ENCODE measurements at regions of chr4 and their contacts with region 1.

Region 1: DNA sequence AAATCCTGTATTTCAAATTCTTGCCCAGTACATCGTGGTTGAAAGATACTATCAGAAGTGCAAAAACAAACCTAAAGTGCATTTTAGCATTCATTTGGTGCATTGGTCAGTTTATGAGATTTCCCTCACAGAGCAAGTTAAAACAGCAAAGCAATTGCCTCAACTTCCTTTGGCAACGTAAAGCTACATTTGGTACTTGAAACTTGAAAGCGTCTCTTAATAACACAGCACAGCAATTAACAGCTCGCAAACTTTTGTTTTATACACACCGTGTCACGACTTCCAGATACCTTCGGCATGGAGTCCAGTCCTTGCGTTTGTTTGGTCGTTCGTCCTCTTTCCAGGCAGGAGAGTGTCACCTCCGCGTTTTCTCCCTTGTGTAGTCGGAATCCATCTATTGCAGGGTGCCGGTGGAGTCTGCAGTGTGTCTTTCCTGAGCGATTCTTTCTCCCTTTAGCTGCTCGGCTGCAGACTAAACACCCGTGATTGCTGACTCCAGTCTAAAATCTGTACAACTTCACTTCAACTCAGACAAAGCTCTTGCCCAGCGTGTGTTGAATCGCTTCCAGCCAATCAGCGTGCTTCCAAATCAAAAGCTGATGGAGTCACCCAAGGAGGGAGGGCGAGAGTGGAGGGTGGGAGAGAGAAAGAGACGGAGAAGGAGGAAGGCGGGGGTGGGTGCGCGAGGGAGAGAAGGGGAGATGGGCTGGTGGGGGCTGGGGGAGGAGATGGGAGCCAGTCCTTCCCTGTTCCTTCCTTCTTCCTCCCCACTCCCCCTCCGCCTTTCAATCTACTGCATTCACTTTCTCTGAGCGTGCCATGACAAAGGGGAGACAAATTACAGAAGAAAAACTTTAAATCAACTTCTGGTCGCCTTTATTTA is at the start of gene PCDH18:
- DNase-seq: peak; percentile 64

Region 2: GRCh38 chr4:137510557-137511265 is 21.5 kb before region 1 on chr4:
- CTCF ChIA-PET with region 1: interaction called, 5 read pairs
- POLR2A ChIA-PET with region 1: interaction called, 10 read pairs
- DNase-seq: peak; percentile 48